MCF 10A (cell line): ENCODE measurements at regions of chr20 and their contacts with region 1.

Region 1: DNA sequence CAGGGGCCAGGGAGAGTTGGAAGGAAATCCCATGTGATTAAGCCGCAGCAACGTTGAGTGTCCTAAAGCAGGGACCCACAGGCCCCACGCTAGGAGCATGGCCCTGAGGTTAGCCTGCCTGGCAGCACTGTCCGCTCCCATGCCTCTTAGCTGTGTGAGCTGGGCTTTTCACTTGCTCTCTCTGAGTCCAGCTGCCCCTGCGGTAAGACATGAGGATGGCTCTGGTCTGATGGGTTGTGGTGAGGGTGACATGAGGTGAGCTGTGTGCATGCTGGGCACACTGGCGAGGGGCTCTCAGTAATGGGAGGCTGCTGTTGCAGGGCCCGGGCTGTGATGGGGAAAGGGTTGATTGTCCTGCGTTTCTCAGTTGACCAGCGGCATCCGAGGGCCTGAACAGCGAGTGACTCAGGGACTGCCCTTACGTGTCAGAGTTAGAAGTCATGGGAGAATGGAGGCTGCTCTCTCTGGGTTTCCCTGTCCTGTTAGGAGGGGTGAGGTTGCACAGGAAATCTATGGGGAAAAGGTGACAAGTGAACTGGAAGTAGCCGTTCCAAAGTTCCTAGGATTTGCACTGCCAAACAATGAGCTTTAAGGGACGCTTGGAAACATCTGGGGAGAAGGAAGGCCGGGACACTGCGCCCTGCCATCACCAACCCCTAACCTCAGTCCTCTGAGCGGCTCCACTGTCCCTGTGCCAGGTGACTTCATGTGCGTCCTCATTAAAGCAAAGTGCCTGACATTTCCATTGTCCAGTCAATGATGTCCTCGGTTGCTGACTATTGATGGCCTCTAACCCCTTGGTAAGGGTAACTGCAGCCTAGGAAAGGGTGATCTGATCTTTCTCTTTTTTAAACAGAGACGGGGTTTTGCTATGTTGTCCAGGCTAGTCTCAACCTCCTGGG is 51.3 kb downstream of the ADNP start:
- DNase-seq: no peak
- H3K4me3 Mint-ChIP-seq: no peak overlapping the region
- H3K27ac Mint-ChIP-seq: peak overlapping the region; percentile 65
- H3K4me1 Mint-ChIP-seq: no peaks in the 10 kb centered on the region
- H3K27me3 Mint-ChIP-seq: no peaks in the 10 kb centered on the region
- CTCF ChIP-seq: no peak

Region 2: DNA sequence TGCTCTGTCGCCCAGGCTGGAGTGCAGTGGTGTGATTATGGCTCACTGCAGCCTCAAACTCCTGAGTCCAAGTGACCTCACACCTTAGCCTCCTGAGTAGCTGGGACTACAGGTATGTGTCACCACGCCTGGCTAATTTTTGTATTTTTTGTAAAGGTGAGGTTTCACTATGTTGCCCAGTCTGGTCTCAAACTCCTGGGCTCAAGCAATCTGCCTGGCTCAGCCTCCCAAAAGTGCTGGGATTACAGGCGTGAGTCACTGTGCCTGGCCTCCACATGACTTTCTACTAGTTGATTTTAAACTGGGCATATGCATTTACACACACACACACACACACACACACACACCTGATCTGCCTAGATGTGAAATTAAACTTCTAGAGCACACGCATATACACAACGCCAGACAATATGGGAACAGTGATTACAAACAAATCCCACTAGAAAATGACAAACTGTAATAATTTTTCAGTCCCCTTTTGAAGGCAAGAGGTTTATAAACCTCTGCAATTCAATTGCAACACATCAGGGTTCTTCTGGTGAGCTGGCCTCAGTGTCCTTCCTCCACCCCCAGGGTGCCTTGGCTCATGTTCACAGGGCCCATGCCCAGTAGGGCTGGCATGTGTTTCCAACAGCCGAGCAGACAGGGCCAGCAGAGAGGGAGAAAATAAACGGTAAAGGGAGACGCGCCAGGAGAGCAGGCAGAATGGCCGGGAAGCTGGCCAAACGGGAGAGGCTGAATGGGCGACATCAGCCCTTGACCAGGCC is 117.3 kb before region 1 on chr20:
- CTCF ChIA-PET with region 1: no interaction called
- POLR2A ChIA-PET with region 1: no interaction called
- intact Hi-C with region 1: no loop called
- DNase-seq: peak; percentile 94
- H3K4me3 Mint-ChIP-seq: peak overlapping the region; percentile 61
- H3K27ac Mint-ChIP-seq: peak overlapping the region; percentile 89
- H3K4me1 Mint-ChIP-seq: peaks cover 27% of the 10 kb centered on the region
- H3K27me3 Mint-ChIP-seq: no peaks in the 10 kb centered on the region
- CTCF ChIP-seq: no peak

Region 3: DNA sequence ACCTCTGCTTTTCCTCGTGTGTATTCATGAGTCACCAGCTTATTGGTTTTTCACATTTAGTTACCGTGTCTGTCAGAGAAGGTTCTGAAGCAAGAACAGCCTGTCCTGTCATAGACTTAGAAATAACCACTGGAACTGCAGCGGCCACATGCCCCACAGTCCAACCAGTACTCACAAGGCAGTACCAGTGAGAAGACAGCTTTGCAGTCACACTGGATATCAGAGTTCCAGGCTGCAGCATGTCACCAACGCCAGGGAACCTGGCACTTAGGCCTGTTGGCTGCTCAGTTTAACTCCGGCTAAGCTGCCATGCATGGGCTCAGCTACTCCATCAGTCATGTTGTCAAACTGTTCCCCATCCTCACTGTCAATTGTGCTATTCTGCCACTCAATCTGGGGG is 11.2 kb after region 1 on chr20:
- CTCF ChIA-PET with region 1: interaction called, 7 read pairs
- POLR2A ChIA-PET with region 1: interaction called, 16 read pairs
- intact Hi-C with region 1: no loop called
- DNase-seq: no peak
- H3K4me3 Mint-ChIP-seq: no peak overlapping the region
- H3K27ac Mint-ChIP-seq: no peak overlapping the region
- H3K4me1 Mint-ChIP-seq: no peaks in the 10 kb centered on the region
- H3K27me3 Mint-ChIP-seq: no peaks in the 10 kb centered on the region
- CTCF ChIP-seq: no peak

Region 4: DNA sequence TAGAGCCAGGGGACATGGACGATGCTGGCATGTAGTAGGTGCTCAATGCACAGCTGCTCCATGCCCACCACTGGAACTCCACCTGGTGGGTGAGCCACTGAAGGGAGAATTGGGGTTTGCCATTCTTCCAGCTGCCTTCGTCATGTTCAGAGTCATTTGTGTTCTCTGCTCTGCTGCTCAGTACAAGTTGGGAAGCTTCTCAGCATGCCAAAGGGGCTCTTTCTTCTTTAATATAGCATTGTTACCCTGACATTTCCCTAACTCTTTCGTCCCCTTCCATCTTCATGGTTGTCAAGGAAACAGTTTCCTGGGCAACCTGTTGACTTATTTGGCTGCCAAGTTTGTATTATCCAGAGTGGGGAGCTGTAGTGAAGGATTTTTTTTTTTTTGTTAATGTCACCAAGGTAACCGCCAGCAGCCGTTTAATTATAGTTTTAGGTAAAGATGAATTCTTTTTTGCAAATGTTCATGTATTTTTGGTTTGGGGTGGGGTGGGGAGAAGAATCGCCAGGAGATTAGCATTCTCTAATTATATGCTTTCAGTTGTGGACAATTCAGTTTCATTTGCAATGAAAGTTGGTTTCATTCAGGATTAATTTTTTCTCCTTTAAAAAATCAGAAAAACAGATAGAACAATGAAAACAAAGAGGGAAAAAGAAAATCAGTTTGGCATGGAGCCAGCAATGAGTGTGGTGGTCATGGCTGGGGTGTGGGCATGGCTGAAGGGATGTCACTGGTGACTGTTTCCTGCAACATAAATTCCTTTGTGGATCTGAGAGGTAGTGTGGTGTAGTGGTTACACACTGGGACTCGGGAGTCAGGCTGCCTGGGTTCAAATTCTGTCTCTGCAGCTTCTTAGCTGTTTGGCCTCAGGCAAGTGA is 216.0 kb after region 1 on chr20:
- CTCF ChIA-PET with region 1: no interaction called
- POLR2A ChIA-PET with region 1: no interaction called
- intact Hi-C with region 1: no loop called
- DNase-seq: no peak
- H3K4me3 Mint-ChIP-seq: no peak overlapping the region
- H3K27ac Mint-ChIP-seq: no peak overlapping the region
- H3K4me1 Mint-ChIP-seq: peaks cover 6% of the 10 kb centered on the region
- H3K27me3 Mint-ChIP-seq: peaks cover 22% of the 10 kb centered on the region
- CTCF ChIP-seq: no peak